GM12878 (cell line): ENCODE measurements at regions of chr3 and their contacts with region 1.

Region 1: GRCh38 chr3:66822186-66823008 is 175.7 kb upstream of the KBTBD8 start:
- DNase-seq: peak; percentile 9
- ATAC-seq: peak; percentile 99
- H3K4me3 ChIP-seq: no peak overlapping the region
- H3K27ac ChIP-seq: no peak overlapping the region
- H3K4me1 ChIP-seq: no peaks in the 10 kb centered on the region
- H3K27me3 ChIP-seq: no peaks in the 10 kb centered on the region
- CTCF ChIP-seq: peak; percentile 70 to 82 (median 77)
- EP300 ChIP-seq: no peak
- POLR2A ChIP-seq: no peak
- RAD21 ChIP-seq: peak; percentile 70

Region 2: GRCh38 chr3:65785065-65785645 is 1037.2 kb before region 1 on chr3:
- CTCF ChIA-PET with region 1: no interaction called
- POLR2A ChIA-PET with region 1: no interaction called
- RAD21 ChIA-PET with region 1: no interaction called
- SMC1A ChIA-PET with region 1: no interaction called
- in situ Hi-C with region 1: no loop called
- intact Hi-C with region 1: loop called (anchors 10 kb)
- DNase-seq: no peak
- ATAC-seq: peak; percentile 63
- H3K4me3 ChIP-seq: no peak overlapping the region
- H3K27ac ChIP-seq: no peak overlapping the region
- H3K4me1 ChIP-seq: no peaks in the 10 kb centered on the region
- H3K27me3 ChIP-seq: no peaks in the 10 kb centered on the region
- CTCF ChIP-seq: peak; percentile 44 to 56 (median 52); a peak in 5 of 6 replicates
- EP300 ChIP-seq: no peak
- POLR2A ChIP-seq: no peak
- RAD21 ChIP-seq: peak; percentile 74

Region 3: DNA sequence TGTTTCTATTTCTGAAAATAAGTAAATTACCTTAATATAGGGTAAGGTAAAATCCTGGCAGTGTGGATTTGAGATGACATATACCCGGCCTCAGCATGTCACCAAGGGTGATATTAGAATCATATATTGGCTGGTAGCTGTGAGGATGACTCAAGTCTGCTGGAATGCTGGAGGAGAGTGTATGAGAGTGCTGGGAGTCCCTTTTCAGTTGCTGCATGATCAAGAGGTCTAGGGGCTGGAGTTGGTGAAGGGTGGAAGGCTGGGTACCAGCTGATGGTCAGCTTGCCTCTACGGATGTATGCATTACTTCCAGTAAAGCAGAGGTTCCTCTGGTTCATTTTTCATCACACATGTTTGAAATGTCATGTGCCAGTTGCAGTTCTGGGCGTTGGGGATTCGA is 561.0 kb before region 1 on chr3:
- CTCF ChIA-PET with region 1: interaction called, 100 read pairs
- POLR2A ChIA-PET with region 1: no interaction called
- RAD21 ChIA-PET with region 1: interaction called, 7 read pairs
- SMC1A ChIA-PET with region 1: interaction called, 70 read pairs
- in situ Hi-C with region 1: no loop called
- intact Hi-C with region 1: no loop called
- DNase-seq: no peak
- ATAC-seq: no peak
- H3K4me3 ChIP-seq: no peak overlapping the region
- H3K27ac ChIP-seq: no peak overlapping the region
- H3K4me1 ChIP-seq: no peaks in the 10 kb centered on the region
- H3K27me3 ChIP-seq: no peaks in the 10 kb centered on the region
- CTCF ChIP-seq: no peak
- EP300 ChIP-seq: no peak
- POLR2A ChIP-seq: no peak
- RAD21 ChIP-seq: no peak

Region 4: DNA sequence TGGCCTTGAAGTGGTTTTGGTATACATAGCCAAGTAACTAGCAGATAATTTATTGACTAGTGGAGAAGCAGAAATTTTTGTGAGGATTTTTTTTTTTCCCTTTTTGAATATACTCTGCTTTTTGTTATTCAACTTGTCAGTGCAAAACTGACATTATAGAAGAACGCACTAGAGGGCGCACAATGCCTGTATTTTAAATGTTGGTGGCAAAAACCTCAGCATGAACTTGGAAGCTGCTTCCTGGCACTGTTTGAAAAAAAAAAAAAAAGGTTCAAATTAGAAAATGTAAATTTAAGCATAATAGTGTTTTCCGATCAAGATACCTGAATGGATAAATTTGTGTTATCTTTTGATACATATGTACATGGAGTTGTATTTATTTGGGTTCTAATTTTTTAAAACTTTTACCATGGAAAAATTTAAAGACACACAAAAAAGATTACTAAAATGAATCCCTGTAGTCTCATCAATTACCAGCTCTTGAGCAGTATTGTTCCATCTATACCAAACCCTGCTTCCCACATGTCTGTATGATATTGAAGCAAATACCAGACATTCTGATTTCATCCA is 545.6 kb before region 1 on chr3:
- CTCF ChIA-PET with region 1: interaction called, 74 read pairs
- POLR2A ChIA-PET with region 1: no interaction called
- RAD21 ChIA-PET with region 1: interaction called, 7 read pairs
- SMC1A ChIA-PET with region 1: interaction called, 5 read pairs
- in situ Hi-C with region 1: loop called (anchors 5 kb)
- intact Hi-C with region 1: no loop called
- DNase-seq: no peak
- ATAC-seq: peak; percentile 70
- H3K4me3 ChIP-seq: no peak overlapping the region
- H3K27ac ChIP-seq: no peak overlapping the region
- H3K4me1 ChIP-seq: no peaks in the 10 kb centered on the region
- H3K27me3 ChIP-seq: no peaks in the 10 kb centered on the region
- CTCF ChIP-seq: peak; percentile 41 to 69 (median 49); a peak in 5 of 6 replicates
- EP300 ChIP-seq: no peak
- POLR2A ChIP-seq: no peak
- RAD21 ChIP-seq: peak; percentile 89

Region 5: GRCh38 chr3:66407611-66408218 is 414.7 kb before region 1 on chr3:
- CTCF ChIA-PET with region 1: interaction called, 149 read pairs
- POLR2A ChIA-PET with region 1: no interaction called
- RAD21 ChIA-PET with region 1: interaction called, 23 read pairs
- SMC1A ChIA-PET with region 1: interaction called, 15 read pairs
- in situ Hi-C with region 1: loop called (anchors 5 kb)
- intact Hi-C with region 1: no loop called
- DNase-seq: no peak
- ATAC-seq: peak; percentile 98
- H3K4me3 ChIP-seq: no peak overlapping the region
- H3K27ac ChIP-seq: no peak overlapping the region
- H3K4me1 ChIP-seq: no peaks in the 10 kb centered on the region
- H3K27me3 ChIP-seq: no peaks in the 10 kb centered on the region
- CTCF ChIP-seq: peak; percentile 85 to 96 (median 93)
- EP300 ChIP-seq: no peak
- POLR2A ChIP-seq: no peak
- RAD21 ChIP-seq: peak; percentile 94

Region 6: DNA sequence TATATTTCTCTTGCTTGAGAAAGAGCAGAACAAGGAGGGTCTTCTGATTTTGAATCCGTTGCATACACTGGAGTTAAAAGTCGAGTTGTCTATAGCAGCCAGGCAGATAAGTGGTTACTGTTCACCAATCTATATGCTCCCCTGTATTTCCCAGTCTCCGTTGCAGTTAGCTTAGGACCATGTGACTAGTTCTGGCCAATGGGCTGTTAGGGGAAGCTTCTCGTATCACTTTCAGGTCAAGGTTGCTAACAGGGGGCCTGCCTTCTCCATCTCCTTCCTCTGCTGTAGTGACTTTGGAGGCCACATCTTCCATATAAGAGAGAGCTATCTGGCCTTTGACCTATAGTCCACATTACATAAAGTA is 12.8 kb before region 1 on chr3:
- CTCF ChIA-PET with region 1: interaction called, 18 read pairs
- POLR2A ChIA-PET with region 1: no interaction called
- RAD21 ChIA-PET with region 1: interaction called, 3 read pairs
- SMC1A ChIA-PET with region 1: interaction called, 4 read pairs
- in situ Hi-C with region 1: no loop called
- intact Hi-C with region 1: no loop called
- DNase-seq: no peak
- ATAC-seq: no peak
- H3K4me3 ChIP-seq: no peak overlapping the region
- H3K27ac ChIP-seq: no peak overlapping the region
- H3K4me1 ChIP-seq: no peaks in the 10 kb centered on the region
- H3K27me3 ChIP-seq: no peaks in the 10 kb centered on the region; a peak in 1 of 4 replicates
- CTCF ChIP-seq: no peak
- EP300 ChIP-seq: no peak
- POLR2A ChIP-seq: no peak
- RAD21 ChIP-seq: no peak

Region 7: GRCh38 chr3:66885326-66886000 is 63.1 kb after region 1 on chr3:
- CTCF ChIA-PET with region 1: no interaction called
- POLR2A ChIA-PET with region 1: no interaction called
- RAD21 ChIA-PET with region 1: no interaction called
- SMC1A ChIA-PET with region 1: no interaction called
- in situ Hi-C with region 1: no loop called
- intact Hi-C with region 1: no loop called
- DNase-seq: no peak
- ATAC-seq: peak; percentile 79
- H3K4me3 ChIP-seq: no peak overlapping the region
- H3K27ac ChIP-seq: no peak overlapping the region
- H3K4me1 ChIP-seq: no peaks in the 10 kb centered on the region
- H3K27me3 ChIP-seq: no peaks in the 10 kb centered on the region
- CTCF ChIP-seq: no peak
- EP300 ChIP-seq: no peak
- POLR2A ChIP-seq: no peak
- RAD21 ChIP-seq: no peak

Region 8: GRCh38 chr3:66989860-66990665 is 167.7 kb after region 1 on chr3:
- CTCF ChIA-PET with region 1: no interaction called
- POLR2A ChIA-PET with region 1: no interaction called
- RAD21 ChIA-PET with region 1: no interaction called
- SMC1A ChIA-PET with region 1: no interaction called
- in situ Hi-C with region 1: no loop called
- intact Hi-C with region 1: no loop called
- DNase-seq: peak; percentile 40
- ATAC-seq: peak; percentile 93
- H3K4me3 ChIP-seq: peak overlapping the region; percentile 67
- H3K27ac ChIP-seq: peak overlapping the region; percentile 45
- H3K4me1 ChIP-seq: no peaks in the 10 kb centered on the region
- H3K27me3 ChIP-seq: no peaks in the 10 kb centered on the region; a peak in 1 of 4 replicates
- CTCF ChIP-seq: peak; percentile 67 to 70 (median 68)
- EP300 ChIP-seq: no peak
- POLR2A ChIP-seq: no peak
- RAD21 ChIP-seq: peak; percentile 83